ENCODE measurements at regions of chr10 and their contacts with region 1.

Region 1: DNA sequence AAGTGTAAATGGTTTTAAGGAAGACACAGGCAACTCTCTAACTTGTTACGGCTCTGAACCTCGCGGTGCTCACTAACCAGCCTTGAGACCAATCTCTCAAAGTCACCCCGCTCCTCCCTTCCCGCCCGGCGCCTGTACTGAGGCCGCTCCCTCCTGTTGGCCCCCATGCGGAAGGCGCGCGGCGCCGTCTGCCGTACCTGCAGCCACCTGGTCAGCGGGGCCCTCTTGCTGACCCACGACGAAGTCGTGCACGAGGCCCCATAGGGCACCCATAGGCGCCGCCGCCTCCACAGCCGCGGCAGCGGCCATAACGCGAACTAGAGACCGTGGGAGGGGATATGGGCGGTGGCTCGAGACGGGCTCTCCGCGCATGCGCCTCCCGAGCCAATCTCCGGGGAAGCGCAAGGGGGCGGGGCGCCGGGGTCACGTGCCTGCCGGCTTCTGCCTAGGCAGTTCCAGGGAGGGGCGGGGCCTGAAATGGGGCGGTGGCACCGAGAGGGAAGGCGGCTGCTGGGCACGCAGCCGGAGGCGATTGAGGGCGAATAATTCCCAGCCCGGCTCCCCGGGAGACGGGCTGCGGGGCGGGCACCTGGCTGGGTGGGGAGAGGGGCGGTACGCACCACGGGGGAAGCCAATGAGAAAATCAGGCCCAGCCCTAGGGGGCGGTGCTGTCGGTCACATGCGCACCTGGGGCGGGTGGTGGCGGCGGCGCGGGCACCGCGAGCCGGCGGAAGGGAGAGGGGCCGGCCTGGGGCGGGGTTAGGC is at the start of gene MMS19:
- DNase-seq: peak; percentile 99
- H3K4me3 Mint-ChIP-seq: peak within 1 kb of the TSS; percentile 99
- H3K27ac Mint-ChIP-seq: peak within 1 kb of the TSS; percentile 99
- H3K4me1 Mint-ChIP-seq: peaks cover 47% of the 10 kb centered on the region
- H3K27me3 Mint-ChIP-seq: peaks cover 34% of the 10 kb centered on the region
- total RNA-seq, gene MMS19: 91.8 and 93.2 TPM in 2 replicates

Region 2: DNA sequence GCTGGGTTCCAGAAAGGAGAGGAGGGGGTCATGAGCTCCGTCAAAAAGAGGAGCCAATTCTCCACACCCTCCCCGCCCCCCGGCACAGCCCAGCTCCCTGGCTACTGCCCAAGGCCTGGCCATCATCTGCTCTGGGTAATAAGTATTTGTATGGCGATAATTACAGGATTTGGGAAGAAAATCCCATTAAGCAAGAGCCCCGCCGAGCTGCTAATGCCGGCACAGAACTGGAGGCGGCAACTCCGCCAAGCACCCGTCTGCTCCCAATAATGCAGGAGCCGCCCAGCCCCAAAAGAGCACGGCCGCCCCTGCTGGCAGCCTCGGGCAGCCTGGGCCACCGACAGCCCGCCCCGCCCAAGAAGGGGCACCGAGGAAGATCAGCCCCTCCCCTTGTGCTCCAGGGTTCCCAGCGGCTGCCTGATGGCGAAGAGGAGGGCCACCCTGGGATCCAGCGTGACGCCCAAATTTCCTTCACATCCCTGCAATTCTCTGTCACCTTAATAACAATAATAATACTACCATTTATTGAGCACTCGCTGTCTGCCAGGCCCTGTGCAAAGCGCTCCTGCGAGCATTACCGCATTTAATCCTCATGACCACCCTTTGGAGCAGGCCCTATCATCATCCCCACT is 318.4 kb before region 1 on chr10:
- intact Hi-C with region 1: no loop called
- DNase-seq: no peak
- H3K4me3 Mint-ChIP-seq: no peak overlapping the region
- H3K27ac Mint-ChIP-seq: no peak overlapping the region
- H3K4me1 Mint-ChIP-seq: no peaks in the 10 kb centered on the region
- H3K27me3 Mint-ChIP-seq: peaks cover 44% of the 10 kb centered on the region

Region 3: GRCh38 chr10:97292097-97292862 is 206.0 kb before region 1 on chr10 and contains the start of gene ARHGAP19:
- intact Hi-C with region 1: loop called (anchors 1 kb)
- DNase-seq: peak; percentile 92
- H3K4me3 Mint-ChIP-seq: peak within 1 kb of the TSS; percentile 91
- H3K27ac Mint-ChIP-seq: peak within 1 kb of the TSS; percentile 92
- H3K4me1 Mint-ChIP-seq: peaks cover 22% of the 10 kb centered on the region
- H3K27me3 Mint-ChIP-seq: peaks cover 3% of the 10 kb centered on the region
- total RNA-seq, gene ARHGAP19: 27.1 and 27.8 TPM in 2 replicates

Region 4: DNA sequence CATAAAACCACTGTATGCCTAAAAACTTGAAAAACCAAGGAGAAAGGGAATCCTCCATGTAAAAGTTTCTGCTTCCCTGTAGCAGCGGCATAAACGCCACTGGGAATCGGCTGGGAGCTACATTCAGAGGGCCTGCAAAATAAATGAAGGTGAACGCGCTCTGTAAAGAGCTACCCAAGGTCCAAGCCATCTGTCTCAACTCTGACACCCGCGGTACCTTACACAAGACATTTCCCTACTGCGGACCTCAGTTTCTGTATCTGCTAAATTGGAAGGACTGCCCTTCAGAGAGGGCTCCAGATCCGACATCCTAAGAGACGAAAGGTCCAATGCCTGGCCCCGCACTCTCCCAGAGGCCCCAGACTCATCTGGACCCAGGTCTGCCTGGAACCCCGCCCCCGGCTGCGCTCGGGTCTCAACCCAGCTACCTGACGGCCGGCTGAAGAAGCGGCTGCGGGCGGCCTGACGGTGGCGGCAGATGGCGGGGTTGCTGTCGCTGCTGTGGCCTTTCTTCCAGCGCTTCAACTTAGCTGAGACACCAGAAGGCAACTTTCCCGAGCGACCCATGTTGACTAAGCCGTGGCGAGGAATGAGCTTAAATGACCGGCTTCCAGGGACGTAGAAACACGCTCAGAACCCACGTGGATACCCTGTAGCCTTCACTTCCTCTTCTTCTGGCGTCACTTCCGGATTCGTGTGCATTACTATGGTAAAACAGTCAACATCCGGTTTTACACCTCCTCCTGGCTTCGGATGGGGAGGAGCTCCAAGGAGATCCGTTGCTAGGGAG is 97.4 kb before region 1 on chr10 and contains the start of gene RRP12:
- intact Hi-C with region 1: loop called (anchors 1 kb)
- DNase-seq: peak; percentile 89
- H3K4me3 Mint-ChIP-seq: peak within 1 kb of the TSS; percentile 97
- H3K27ac Mint-ChIP-seq: peak within 1 kb of the TSS; percentile 87
- H3K4me1 Mint-ChIP-seq: peaks cover 17% of the 10 kb centered on the region
- H3K27me3 Mint-ChIP-seq: no peaks in the 10 kb centered on the region
- total RNA-seq, gene RRP12: 99.9 and 104 TPM in 2 replicates

Region 5: GRCh38 chr10:97445722-97446639 is 52.3 kb before region 1 on chr10 and contains the starts of genes EXOSC1 and ZDHHC16:
- intact Hi-C with region 1: loop called (anchors 1 kb)
- DNase-seq: peak; percentile 92
- H3K4me3 Mint-ChIP-seq: peak within 1 kb of the TSS; percentile 93
- H3K27ac Mint-ChIP-seq: peak within 1 kb of the TSS; percentile 92
- H3K4me1 Mint-ChIP-seq: peaks cover 47% of the 10 kb centered on the region
- H3K27me3 Mint-ChIP-seq: no peaks in the 10 kb centered on the region
- total RNA-seq, gene EXOSC1: 55.3 and 57.1 TPM in 2 replicates
- total RNA-seq, gene ZDHHC16: 48.3 and 48.8 TPM in 2 replicates

Region 6: GRCh38 chr10:97479939-97480338 is 18.3 kb before region 1 on chr10:
- intact Hi-C with region 1: no loop called
- DNase-seq: no peak
- H3K4me3 Mint-ChIP-seq: no peak overlapping the region
- H3K27ac Mint-ChIP-seq: no peak overlapping the region
- H3K4me1 Mint-ChIP-seq: peaks cover 6% of the 10 kb centered on the region
- H3K27me3 Mint-ChIP-seq: peaks cover 2% of the 10 kb centered on the region

Region 7: GRCh38 chr10:97632949-97633884 is 135.0 kb after region 1 on chr10 and contains the start of gene MORN4:
- intact Hi-C with region 1: loop called (anchors 1 kb)
- DNase-seq: peak; percentile 89
- H3K4me3 Mint-ChIP-seq: peak within 1 kb of the TSS; percentile 96
- H3K27ac Mint-ChIP-seq: peak within 1 kb of the TSS; percentile 89
- H3K4me1 Mint-ChIP-seq: peaks cover 19% of the 10 kb centered on the region
- H3K27me3 Mint-ChIP-seq: peaks cover 2% of the 10 kb centered on the region
- total RNA-seq, gene MORN4: 1.9 TPM in 2 replicates

Region 8: GRCh38 chr10:97686962-97687784 is 188.9 kb after region 1 on chr10 and contains the start of gene AVPI1:
- intact Hi-C with region 1: loop called (anchors 1 kb)
- DNase-seq: peak; percentile 92
- H3K4me3 Mint-ChIP-seq: peak within 1 kb of the TSS; percentile 78
- H3K27ac Mint-ChIP-seq: peak within 1 kb of the TSS; percentile 68
- H3K4me1 Mint-ChIP-seq: peaks cover 14% of the 10 kb centered on the region
- H3K27me3 Mint-ChIP-seq: peaks cover 14% of the 10 kb centered on the region
- total RNA-seq, gene AVPI1: 0.66 and 0.93 TPM in 2 replicates

Measured in activated T-helper 1 cell treated with anti-CD3 and anti-CD28 coated beads, Interleukin-12 subunit alpha, Interleukin-12 subunit beta, Interleukin-2, Interleukin-4 antibody, amounts not matched to agents 30 ng/mL and 10 ng/mL and 1 ng/mL, durations not matched to agents 14 hours and 24 hours and 36 hours (primary cell).